SK-N-SH (cell line): ENCODE measurements at regions of chr1 and their contacts with region 1.

Region 1: DNA sequence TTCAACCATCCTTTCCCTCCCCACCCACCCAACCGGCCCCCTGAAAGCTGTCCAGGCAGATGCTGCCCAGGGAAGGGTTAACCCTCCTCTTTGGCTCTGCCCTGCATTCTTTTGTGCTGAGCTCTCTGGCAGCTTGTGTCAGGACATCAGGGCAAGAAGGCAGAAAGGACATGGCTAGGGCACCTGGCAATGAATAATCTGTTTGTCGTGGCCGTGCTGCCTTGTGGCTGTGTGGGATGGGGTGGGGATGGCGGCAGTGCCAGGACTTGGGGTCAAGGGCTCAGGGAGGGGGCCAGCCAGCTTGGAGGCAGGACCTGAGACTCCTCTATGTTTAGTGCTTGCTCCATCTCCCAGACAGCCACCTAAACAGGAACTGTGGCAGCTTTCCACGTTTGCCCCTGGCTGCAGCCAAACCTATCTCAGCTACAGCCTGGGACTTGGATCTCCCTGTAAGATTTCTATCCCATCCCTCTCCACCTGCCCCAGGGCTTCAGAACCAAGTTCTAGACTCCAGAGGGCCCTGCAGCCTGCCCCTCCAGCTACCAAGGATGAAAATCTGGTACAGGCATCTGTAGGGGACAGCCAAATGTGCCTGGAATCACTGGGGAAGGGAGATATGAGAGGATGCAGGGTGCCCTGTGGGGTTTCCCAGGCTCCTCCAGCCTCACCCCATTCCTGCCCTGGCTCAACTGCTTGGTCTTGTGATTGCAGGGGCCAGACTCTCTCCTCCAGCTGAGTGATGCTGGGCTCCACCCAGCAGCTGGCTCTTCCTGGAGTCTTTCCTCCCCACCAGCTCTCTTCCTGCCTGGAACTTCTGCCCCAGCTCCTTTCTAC is 9.7 kb upstream of the GPR37L1 start:
- DNase-seq: no peak
- H3K4me3 ChIP-seq: no peak overlapping the region
- H3K27ac ChIP-seq: peak overlapping the region in 1 of 2 experiments; percentile 1; a peak in 1 of 4 replicates
- H3K4me1 ChIP-seq: peaks cover 6 to 12% of the 10 kb centered on the region in 2 experiments; a peak in 2 of 4 replicates
- H3K27me3 ChIP-seq: no peaks in the 10 kb centered on the region
- CTCF ChIP-seq: no peak
- EP300 ChIP-seq: no peak
- RAD21 ChIP-seq: no peak

Region 2: GRCh38 chr1:201905234-201905890 is 207.7 kb before region 1 on chr1:
- CTCF ChIA-PET with region 1: no interaction called
- POLR2A ChIA-PET with region 1: no interaction called
- DNase-seq: no peak
- H3K4me3 ChIP-seq: no peak overlapping the region
- H3K27ac ChIP-seq: peak overlapping the region; percentile 71 to 88
- H3K4me1 ChIP-seq: peaks cover 5 to 33% of the 10 kb centered on the region in 2 experiments; a peak in 3 of 4 replicates
- H3K27me3 ChIP-seq: no peaks in the 10 kb centered on the region
- CTCF ChIP-seq: no peak
- EP300 ChIP-seq: no peak
- RAD21 ChIP-seq: no peak

Region 3: GRCh38 chr1:201982623-201983379 is 130.3 kb before region 1 on chr1 and contains the start of gene RNPEP:
- CTCF ChIA-PET with region 1: interaction called, 14 read pairs
- POLR2A ChIA-PET with region 1: no interaction called
- DNase-seq: peak; percentile 82
- H3K4me3 ChIP-seq: peak within 1 kb of the TSS; percentile 67 to 69
- H3K27ac ChIP-seq: peak within 1 kb of the TSS; percentile 66 to 78
- H3K4me1 ChIP-seq: peaks cover 0 to 8% of the 10 kb centered on the region in 2 experiments; a peak in 2 of 4 replicates
- H3K27me3 ChIP-seq: no peaks in the 10 kb centered on the region
- CTCF ChIP-seq: peak; percentile 22; the same call in 1 of the 2 replicates
- EP300 ChIP-seq: no peak
- RAD21 ChIP-seq: no peak
- polyA plus RNA-seq, gene RNPEP: 36.7 and 46.7 TPM in 2 replicates

Region 4: DNA sequence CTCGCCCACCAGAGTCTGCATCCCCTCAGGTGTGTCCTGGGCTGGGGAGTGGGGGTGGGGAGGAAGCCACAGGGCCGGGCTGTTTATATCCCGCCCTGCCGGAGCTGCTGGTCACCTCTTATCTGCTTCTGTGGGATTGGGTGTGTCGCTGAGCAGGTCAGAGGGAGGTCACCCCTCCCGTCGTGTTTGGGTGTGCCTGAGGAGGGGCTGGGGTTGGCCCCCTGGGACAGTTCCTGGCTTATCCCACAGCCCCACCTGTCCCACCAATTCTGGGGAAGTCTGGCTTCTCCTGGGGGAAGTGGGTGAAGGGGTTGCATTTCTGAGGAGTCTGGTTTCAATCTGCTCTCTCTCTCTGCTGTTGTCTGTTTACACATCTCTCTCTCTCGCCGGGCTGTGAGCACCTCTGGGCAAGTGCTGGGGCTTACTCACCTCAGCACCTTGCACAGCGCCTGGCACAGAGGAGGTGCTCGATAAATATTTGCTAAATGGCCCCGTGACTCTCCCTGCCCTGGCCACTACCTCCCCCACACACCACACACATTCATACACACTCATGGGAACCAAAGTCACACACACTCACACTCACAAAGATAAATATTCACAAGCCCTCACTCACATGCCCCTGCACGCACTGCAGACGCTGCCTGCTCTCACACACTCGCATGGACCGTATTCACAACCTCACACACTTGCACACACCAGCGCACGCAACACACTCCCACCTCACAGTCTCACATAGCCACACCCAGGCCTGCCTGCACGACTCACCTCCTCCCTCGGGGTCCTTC is 94.4 kb before region 1 on chr1:
- CTCF ChIA-PET with region 1: interaction called, 411 read pairs
- POLR2A ChIA-PET with region 1: no interaction called
- DNase-seq: no peak
- H3K4me3 ChIP-seq: no peak overlapping the region
- H3K27ac ChIP-seq: no peak overlapping the region
- H3K4me1 ChIP-seq: no peaks in the 10 kb centered on the region; a peak in 1 of 4 replicates
- H3K27me3 ChIP-seq: no peaks in the 10 kb centered on the region
- CTCF ChIP-seq: no peak
- EP300 ChIP-seq: no peak
- RAD21 ChIP-seq: no peak